HEK293 (cell line): ENCODE measurements at regions of chr22 and their contacts with region 1.

Region 1: DNA sequence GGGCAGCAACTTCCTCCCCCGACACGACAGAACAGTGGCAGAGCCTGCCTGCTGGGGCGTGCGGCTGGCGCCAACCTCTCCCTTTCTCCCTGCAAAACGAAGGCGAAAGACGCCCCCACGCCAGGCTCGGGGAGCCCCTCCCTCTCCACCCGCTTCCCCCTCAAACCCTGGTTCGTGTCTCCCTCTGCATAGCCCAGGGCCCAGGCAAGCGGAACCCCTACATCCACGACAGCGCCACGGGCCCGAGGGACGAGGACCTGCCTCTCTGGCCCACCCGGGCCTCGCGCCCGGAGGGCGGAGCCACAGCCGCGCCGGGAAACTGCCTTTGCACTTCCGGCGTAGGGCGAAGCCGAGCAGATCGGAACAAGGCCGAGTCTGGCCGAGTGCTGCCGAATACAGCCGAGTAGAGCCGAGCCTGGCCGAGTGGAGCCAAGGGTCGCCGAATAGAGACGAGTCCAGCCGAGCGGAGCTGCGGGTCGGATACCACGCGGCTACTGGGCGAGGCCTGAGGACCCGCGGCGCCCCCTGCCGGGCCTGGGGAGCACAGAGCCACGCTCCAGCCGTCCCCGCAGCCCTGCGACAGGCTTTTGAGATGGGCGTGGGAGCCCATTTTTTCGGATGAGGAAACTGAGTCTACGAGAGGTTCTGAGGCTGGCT is 11.2 kb upstream of the C1QTNF6 start:
- H3K4me3 ChIP-seq: peak overlapping the region; percentile 48
- H3K27ac ChIP-seq: peak overlapping the region; percentile 92
- H3K4me1 ChIP-seq: 0 out of 2 replicates have a peak, but pooled peaks cover 6% of the 10 kb centered on the region
- CTCF ChIP-seq: peak; percentile 91

Region 2: GRCh38 chr22:37166675-37167066 is 32.6 kb before region 1 on chr22:
- CTCF ChIA-PET with region 1: interaction called, 38 read pairs
- POLR2A ChIA-PET with region 1: interaction called, 4 read pairs
- H3K4me3 ChIP-seq: no peak overlapping the region
- H3K27ac ChIP-seq: no peak overlapping the region
- H3K4me1 ChIP-seq: no peaks in the 10 kb centered on the region
- CTCF ChIP-seq: peak; percentile 93

Region 3: DNA sequence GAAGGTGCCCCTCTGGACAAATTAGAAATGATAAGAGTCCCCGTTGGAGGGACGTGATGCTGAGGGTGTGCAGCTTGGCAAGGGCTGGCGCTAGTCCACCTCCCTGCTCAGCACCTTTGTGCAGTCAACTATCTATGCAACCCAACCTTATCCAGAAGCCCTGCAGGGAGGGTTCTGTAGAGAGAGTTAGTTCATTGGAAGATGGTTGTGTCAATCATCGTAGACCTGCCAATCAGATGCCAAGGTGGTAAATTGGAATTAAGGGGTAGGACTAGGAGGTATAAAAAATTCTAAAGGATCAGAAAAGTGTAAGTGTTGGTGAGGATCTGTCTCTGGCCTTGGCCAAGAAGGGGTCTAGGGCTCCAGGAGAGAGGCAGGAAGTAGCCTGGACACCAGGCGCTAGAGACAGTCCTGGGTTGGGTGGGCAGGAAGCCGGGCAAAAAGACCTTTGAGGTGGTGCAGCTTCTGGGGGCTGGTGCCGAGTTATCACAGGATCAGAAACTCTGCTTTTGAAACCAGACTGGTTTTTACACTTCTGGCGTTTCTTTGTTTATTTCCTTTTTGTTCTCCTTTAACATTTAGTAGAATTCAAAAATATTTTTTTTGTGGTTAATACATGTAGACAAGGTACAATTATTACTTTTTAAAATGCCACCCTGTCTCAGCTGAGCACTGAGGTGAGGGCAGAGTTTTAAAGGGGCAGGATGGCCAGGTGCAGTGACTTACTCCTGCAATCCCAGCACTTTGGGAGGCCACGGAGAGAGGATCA is 12.8 kb before region 1 on chr22:
- CTCF ChIA-PET with region 1: interaction called, 15 read pairs
- POLR2A ChIA-PET with region 1: interaction called, 10 read pairs
- H3K4me3 ChIP-seq: no peak overlapping the region
- H3K27ac ChIP-seq: no peak overlapping the region
- H3K4me1 ChIP-seq: peaks cover 3% of the 10 kb centered on the region; the same call in 1 of the 2 replicates
- CTCF ChIP-seq: no peak

Region 4: DNA sequence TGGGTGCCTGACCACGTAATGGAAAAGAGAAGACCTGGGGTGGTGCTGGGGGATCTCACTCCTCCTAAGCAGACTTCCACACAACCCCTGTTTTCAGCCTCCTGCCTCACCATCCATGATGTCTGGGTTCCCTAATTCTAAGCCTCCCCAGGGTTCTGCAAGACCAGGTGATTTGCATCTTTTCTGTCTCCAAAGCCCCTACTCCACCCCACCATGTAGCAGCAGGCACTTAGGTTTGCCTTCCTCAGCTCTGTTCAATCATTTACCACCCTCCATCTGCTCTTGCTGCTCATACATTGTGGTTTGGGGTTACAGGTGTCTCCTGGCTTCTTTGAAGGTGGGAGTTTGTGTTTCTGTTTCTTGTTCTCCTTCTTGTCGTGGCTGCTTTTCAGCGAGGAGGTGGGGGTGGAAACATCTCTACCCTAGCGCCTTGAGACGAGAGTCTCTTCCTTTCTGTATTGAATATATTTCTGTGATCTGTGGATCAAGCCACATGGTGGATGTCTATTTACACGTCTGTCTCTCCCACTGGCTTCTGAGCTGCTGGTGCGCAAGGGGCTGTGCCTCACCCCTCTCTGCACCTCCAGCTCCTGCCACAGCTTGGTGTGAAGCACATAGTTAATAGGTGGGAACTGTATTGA is 19.7 kb after region 1 on chr22:
- CTCF ChIA-PET with region 1: interaction called, 19 read pairs
- POLR2A ChIA-PET with region 1: interaction called, 4 read pairs
- H3K4me3 ChIP-seq: no peak overlapping the region
- H3K27ac ChIP-seq: no peak overlapping the region
- H3K4me1 ChIP-seq: no peaks in the 10 kb centered on the region
- CTCF ChIP-seq: no peak

Region 5: GRCh38 chr22:37260901-37261336 is 61.7 kb after region 1 on chr22:
- CTCF ChIA-PET with region 1: interaction called, 27 read pairs
- POLR2A ChIA-PET with region 1: interaction called, 4 read pairs
- H3K4me3 ChIP-seq: no peak overlapping the region
- H3K27ac ChIP-seq: no peak overlapping the region
- H3K4me1 ChIP-seq: no peaks in the 10 kb centered on the region
- CTCF ChIP-seq: peak; percentile 62

Region 6: DNA sequence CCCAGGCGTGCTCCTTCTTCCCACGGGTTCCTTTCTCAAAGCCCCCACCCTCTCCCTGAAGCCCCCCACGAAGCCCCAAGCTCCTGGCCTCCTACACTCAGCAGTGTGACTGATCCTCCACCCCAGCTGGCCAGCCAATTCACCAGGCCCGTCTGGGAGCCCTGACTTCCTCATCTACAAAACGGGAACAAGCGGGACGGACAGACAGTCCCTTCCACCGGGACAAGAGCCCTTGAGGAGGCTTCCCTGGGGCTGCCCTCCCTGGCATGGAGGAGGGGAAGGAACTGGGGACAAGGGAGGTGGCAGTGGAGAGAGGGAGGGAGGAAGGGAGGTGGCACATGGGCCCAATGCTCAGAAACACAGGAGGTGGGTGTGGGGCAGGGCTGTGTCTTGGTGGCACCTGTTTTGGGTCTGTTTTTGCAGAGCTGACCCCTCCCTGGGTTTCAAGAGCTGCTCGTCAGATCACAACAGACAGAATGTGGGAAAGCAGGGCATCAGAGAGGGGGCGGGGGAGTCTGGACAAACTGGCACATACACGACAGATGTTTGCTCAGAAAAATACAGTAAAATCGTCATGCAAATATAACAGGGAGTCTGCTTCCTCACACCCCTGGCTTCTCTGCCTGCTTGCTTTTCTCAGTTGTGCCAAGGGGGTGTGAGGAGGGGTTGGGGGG is 171.2 kb after region 1 on chr22:
- CTCF ChIA-PET with region 1: no interaction called
- POLR2A ChIA-PET with region 1: no interaction called
- H3K4me3 ChIP-seq: no peak overlapping the region
- H3K27ac ChIP-seq: no peak overlapping the region
- H3K4me1 ChIP-seq: no peaks in the 10 kb centered on the region
- CTCF ChIP-seq: no peak